Upper lobe of right lung (tissue), 1 donor: ENCODE measurements at regions of chr3 and their contacts with region 1.

Region 1: DNA sequence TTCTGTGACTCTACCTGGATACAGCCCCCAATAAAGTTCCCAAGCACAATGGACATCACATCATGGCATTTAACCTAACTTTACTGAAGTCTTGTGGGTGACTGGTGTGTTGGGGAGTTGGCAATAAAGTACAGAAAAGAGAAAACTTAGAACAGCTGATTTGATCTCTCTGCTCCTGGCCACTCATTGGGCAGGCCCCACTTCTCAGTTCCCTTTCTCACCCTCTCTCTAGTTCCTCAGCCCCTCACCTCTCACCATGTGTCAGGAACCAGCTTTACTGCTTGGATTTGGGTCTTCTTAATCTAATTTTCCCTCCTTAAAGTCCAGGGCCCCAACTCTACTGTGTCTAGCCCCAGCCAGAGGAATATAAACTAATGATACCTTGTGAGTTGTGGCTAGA is 713 bp upstream of the MUC13 start:
- DNase-seq: no peak
- ATAC-seq: no peak
- H3K4me3 ChIP-seq: no peak overlapping the region
- H3K27ac ChIP-seq: no peak overlapping the region
- H3K4me1 ChIP-seq: no peaks in the 10 kb centered on the region
- H3K27me3 ChIP-seq: no peaks in the 10 kb centered on the region
- CTCF ChIP-seq: no peak

Region 2: GRCh38 chr3:125072301-125072700 is 137.0 kb after region 1 on chr3:
- intact Hi-C with region 1: no loop called
- DNase-seq: no peak
- ATAC-seq: no peak
- H3K4me3 ChIP-seq: no peak overlapping the region
- H3K27ac ChIP-seq: no peak overlapping the region
- H3K4me1 ChIP-seq: no peaks in the 10 kb centered on the region
- H3K27me3 ChIP-seq: no peaks in the 10 kb centered on the region
- CTCF ChIP-seq: no peak

Region 3: GRCh38 chr3:125165189-125165947 is 230.1 kb after region 1 on chr3:
- intact Hi-C with region 1: loop called (anchors 10 kb)
- DNase-seq: no peak
- ATAC-seq: peak; percentile 79
- H3K4me3 ChIP-seq: no peak overlapping the region
- H3K27ac ChIP-seq: no peak overlapping the region
- H3K4me1 ChIP-seq: peaks cover 33% of the 10 kb centered on the region
- H3K27me3 ChIP-seq: no peaks in the 10 kb centered on the region
- CTCF ChIP-seq: peak; percentile 72